Activated CD8-positive, alpha-beta T cell treated with anti-CD3 and anti-CD28 coated beads for 36 hours (primary cell): ENCODE measurements at regions of chr14 and their contacts with region 1.

Region 1: GRCh38 chr14:104677512-104678332 is 11.7 kb upstream of the INF2 start:
- DNase-seq: peak; percentile 83
- ATAC-seq: peak; percentile 75
- H3K4me3 Mint-ChIP-seq: peak overlapping the region; percentile 67
- H3K27ac Mint-ChIP-seq: peak overlapping the region; percentile 83
- H3K4me1 Mint-ChIP-seq: peaks cover 29% of the 10 kb centered on the region
- H3K27me3 Mint-ChIP-seq: no peaks in the 10 kb centered on the region
- CTCF ChIP-seq: no peak

Region 2: DNA sequence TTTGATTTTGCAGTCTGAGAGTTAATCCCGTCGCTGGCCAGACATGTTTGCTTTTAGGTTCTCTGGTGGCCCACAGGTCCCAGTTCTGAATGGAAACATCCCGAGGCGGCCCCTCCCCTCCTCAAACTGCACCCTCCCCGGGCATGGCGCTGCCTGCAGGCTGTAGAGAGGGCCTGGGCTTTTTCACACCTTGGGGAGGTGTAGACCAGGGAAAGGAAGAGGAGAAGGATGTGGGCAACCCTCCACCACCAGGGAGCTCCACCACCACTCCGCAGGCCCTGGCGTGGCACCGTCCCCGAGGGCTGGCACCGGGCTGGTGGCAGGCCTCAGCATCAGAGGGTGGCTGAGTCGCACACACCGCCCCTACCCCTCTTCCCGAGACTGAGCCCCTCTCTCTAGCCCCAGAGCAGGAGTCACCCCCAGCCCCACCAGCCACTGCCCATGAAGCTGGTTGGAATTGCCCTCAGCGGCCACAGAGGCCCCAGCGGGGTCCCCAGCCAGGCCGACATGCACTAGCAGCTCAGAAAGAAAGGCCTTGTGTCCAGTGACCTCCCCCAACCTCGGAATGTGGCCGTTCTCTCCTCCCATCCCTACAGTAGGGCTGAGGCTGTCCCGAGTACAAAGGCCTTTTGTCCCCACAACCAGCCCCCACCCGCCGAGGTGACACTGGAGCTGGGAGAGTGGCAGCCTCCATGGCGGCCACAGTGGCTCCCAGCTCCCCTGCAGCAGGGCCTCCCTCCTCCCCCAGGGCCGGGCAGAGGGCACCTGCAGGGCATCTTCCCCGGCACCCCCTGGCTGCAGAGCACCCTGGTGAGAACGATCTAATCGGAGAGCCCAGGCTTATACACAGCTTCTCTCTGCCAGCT is 11.8 kb before region 1 on chr14:
- CTCF ChIA-PET with region 1: interaction called, 24 read pairs
- POLR2A ChIA-PET with region 1: interaction called, 3 read pairs
- intact Hi-C with region 1: no loop called
- DNase-seq: peak; percentile 63
- ATAC-seq: peak; percentile 93
- H3K4me3 Mint-ChIP-seq: no peak overlapping the region
- H3K27ac Mint-ChIP-seq: no peak overlapping the region
- H3K4me1 Mint-ChIP-seq: peaks cover 16% of the 10 kb centered on the region
- H3K27me3 Mint-ChIP-seq: peaks cover 6% of the 10 kb centered on the region
- CTCF ChIP-seq: peak; percentile 52

Region 3: DNA sequence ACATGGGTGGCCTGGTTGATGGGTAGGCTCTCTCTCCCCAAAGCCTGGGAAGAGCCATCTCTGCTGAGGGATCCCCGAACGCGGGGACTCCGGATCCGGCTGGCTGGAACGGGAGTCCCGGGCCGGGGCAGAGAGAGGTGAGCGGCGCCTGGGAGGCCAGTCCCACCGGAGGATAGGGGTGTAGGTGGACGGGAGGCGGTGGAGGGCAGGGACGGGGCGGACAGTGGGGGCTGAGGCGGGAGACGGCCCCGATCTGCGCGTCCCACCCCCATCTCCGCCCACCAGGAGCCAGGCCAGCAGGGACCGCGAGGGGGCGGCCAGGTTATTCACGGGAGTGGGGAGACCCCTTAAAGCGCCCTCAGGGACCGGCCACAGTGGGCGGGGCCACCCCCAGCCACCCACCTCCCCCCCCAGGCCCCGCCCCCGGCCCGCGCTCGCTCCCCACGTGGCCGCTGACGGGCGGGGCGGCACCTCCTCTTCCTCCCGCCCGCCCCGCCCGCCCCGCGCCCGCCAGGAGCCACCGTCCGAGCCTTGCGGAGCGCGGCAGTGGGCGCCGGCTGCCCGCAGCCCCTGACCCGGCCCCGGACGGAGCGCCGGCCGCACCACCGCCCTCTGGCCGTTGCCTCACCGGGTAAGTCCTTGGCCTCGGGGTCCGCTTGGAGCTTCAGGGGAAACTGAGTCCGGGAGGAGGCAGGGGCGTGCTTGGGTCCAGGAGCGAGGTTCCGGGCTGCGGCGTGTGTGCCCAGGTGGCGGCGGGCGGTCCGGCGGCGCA is 11.6 kb after region 1 on chr14 and contains the start of gene INF2:
- CTCF ChIA-PET with region 1: interaction called, 14 read pairs
- POLR2A ChIA-PET with region 1: interaction called, 26 read pairs
- intact Hi-C with region 1: no loop called
- DNase-seq: peak; percentile 65
- ATAC-seq: peak; percentile 67
- H3K4me3 Mint-ChIP-seq: peak within 1 kb of the TSS; percentile 79
- H3K27ac Mint-ChIP-seq: peak within 1 kb of the TSS; percentile 30
- H3K4me1 Mint-ChIP-seq: peaks cover 48% of the 10 kb centered on the region
- H3K27me3 Mint-ChIP-seq: no peaks in the 10 kb centered on the region
- CTCF ChIP-seq: no peak
- total RNA-seq, gene INF2: 61.5 to 65.0 TPM

Region 4: DNA sequence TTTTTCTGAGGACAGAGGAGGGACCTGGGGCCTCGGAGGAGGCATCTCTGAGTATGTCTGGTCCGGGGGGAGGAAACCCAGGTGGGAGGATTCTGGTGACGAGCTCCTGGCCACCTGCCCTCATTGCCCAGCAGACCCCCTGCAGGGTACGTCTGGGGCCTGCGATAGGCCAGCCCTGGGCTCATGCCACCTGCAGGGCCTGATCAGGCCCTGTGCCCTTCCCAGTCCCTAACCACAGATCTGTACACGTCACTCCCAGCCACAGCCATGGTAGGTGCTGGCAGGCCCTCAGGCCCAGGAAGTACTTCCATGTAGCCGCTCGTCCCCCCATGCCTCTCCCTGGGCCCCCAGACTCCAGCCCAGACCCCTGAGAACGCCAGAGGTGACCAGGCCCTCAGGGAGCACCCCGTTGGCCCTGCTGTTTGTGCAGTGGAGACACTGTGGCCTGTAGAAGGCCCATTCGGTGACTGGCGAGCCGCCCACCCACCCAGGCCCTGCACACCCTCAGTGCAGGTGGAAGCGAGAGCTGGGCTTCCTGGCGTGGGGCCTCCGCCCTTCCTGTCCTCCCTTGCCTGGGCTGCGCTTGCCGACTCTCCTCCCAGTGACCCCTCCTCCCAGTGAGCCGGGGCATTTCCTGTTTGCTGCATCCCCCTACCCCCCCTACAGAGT is 17.4 kb after region 1 on chr14:
- CTCF ChIA-PET with region 1: no interaction called
- POLR2A ChIA-PET with region 1: interaction called, 26 read pairs
- intact Hi-C with region 1: no loop called
- DNase-seq: peak; percentile 79
- ATAC-seq: peak; percentile 90
- H3K4me3 Mint-ChIP-seq: peak overlapping the region; percentile 59
- H3K27ac Mint-ChIP-seq: peak overlapping the region; percentile 86
- H3K4me1 Mint-ChIP-seq: peaks cover 34% of the 10 kb centered on the region
- H3K27me3 Mint-ChIP-seq: no peaks in the 10 kb centered on the region
- CTCF ChIP-seq: no peak